ENCODE measurements at regions of chr14 and their contacts with region 1.

Region 1: DNA sequence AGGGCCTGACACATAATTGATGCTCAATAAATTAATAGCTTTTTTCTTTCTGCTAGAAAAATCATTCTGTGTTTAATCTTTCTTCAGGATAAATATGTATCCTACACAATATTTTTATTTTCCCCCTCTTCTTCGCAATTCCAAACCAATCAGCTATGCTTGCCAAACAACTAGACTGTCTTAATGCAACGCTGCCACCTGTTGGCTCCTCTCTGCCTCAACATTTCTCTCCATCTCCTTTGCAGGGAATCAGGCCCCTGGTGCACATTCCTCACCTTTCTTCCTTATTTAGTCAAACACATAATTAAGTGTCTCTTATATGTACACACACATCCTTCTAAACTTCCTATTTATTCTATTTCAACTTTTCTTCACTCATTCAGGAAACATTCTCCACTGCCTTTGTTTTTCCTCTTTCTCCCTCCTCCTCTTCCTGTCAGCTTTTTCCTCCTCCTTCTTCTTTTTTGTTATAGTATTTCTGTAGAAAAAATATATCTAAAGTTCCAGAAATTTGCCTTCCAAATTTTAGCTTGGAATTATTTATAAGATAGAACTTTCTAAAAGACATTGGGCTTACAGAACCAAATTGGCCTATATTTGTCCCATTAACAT is 406.0 kb downstream of the PRKD1 start:
- DNase-seq: peak; percentile 25
- H3K4me3 ChIP-seq: no peak overlapping the region
- H3K27ac ChIP-seq: no peak overlapping the region
- H3K4me1 ChIP-seq: no peaks in the 10 kb centered on the region
- H3K27me3 ChIP-seq: no peaks in the 10 kb centered on the region

Region 2: GRCh38 chr14:28751467-28752058 is 770.1 kb before region 1 on chr14:
- in situ Hi-C with region 1: loop called (anchors 10 kb)
- DNase-seq: peak; percentile 73
- H3K4me3 ChIP-seq: no peak overlapping the region
- H3K27ac ChIP-seq: no peak overlapping the region
- H3K4me1 ChIP-seq: no peaks in the 10 kb centered on the region
- H3K27me3 ChIP-seq: peaks cover 23% of the 10 kb centered on the region

Region 3: DNA sequence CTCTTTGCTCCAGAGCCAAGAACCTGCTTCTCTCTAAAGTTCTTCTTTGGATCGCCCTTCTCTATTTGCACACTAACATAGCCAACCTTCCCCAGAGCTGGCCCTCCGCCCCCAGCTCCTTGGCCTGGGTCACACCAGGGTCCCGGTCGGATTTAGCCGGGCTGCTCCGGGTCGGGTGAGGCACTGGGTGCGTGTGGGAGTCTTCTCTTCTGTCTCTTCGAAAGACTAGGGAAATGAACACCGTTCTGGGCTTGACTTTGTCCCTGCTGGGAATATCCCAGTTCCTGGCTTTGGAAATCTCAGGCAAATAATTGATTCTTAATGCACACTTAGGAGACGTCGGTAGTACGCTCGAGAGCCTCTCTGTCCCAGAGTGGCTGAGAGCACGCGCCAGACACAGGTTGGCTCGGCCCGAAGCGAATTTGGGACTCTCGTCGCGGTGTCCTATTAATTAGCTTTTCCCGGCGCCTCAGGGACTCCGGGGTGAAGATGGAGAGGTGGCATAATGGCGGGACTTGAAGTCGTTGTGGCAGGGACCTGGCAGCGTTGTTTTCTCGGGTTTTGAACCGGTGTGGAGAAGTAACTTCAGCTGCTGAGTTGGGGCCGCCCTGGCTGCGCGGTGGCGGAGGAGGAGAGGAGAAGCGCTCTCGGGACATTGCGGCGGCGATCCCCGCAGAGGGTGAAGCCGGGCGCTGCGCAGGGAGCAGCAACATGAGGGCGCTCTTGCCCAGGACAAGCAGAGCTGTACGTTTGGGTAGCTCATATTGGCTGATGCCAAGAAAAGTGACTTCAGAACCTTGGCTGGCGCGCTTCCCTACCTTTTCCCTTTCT is 747.6 kb before region 1 on chr14:
- in situ Hi-C with region 1: loop called (anchors 10 kb)
- DNase-seq: peak; percentile 73
- H3K4me3 ChIP-seq: peak overlapping the region; percentile 47
- H3K27ac ChIP-seq: no peak overlapping the region
- H3K4me1 ChIP-seq: no peaks in the 10 kb centered on the region
- H3K27me3 ChIP-seq: peaks cover 100% of the 10 kb centered on the region

Region 4: DNA sequence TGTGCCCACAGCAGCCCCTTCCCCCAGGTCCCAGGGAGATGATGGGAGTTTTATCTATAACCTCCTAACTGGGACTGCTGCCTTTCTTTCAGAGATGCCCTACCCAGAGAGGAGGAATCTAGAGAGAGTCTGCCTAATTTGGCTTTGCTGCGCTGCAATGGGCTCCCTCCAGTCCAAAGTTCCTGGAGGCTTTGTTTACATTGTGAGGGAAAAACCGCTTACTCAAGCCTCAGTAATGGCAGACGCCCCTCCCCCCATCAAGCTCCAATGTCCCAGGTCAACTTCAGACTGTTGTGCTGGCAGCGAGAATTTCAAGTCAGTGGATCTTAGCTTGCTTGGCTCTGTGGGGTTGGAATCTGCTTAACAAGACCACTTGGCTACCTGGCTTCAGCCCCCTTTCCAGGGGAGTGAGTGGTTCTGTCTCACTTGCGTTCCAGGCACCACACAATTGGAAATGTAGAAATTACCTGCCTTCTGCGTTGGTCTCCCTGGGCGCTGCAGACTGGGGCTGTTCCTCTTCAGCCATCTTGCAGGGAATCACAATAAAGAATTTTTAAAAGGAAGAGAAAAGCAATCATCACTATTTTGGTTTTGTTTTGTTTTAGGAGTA is 492.6 kb before region 1 on chr14:
- in situ Hi-C with region 1: loop called (anchors 10 kb)
- DNase-seq: no peak
- H3K4me3 ChIP-seq: no peak overlapping the region
- H3K27ac ChIP-seq: no peak overlapping the region
- H3K4me1 ChIP-seq: no peaks in the 10 kb centered on the region
- H3K27me3 ChIP-seq: no peaks in the 10 kb centered on the region

Region 5: DNA sequence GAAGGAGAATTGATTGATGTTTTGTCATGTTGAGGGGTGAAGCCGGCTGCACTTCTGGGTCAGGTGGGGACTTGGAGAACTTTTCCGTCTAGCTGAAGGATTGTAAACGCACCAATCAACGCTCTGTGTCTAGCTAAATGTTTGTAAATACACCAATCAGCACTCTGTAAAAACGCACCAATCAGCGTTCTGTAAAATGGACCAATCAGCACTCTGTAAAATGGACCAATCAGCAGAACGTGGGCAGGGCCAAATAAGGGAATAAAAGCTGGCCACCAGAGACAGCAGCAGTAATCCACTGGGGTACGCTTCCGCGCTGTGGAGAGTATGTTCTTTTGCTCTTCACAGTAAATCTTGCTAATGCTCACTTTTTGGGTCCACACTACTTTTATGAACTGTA is 371.0 kb before region 1 on chr14:
- in situ Hi-C with region 1: no loop called
- DNase-seq: no peak
- H3K4me3 ChIP-seq: no peak overlapping the region
- H3K27ac ChIP-seq: no peak overlapping the region
- H3K4me1 ChIP-seq: 0 out of 2 replicates have a peak, but pooled peaks cover 2% of the 10 kb centered on the region
- H3K27me3 ChIP-seq: no peaks in the 10 kb centered on the region

Region 6: GRCh38 chr14:29222671-29223268 is 298.9 kb before region 1 on chr14:
- in situ Hi-C with region 1: loop called (anchors 10 kb)
- DNase-seq: peak; percentile 79
- H3K4me3 ChIP-seq: peak overlapping the region; percentile 61
- H3K27ac ChIP-seq: no peak overlapping the region
- H3K4me1 ChIP-seq: peaks cover 9% of the 10 kb centered on the region; the same call in 1 of the 2 replicates
- H3K27me3 ChIP-seq: no peaks in the 10 kb centered on the region